ENCODE measurements at regions of chr10 and their contacts with region 1.

Region 1: GRCh38 chr10:110076559-110077318 is 69.0 kb downstream of the ADD3 start:
- DNase-seq: peak; percentile 50 to 75 (median 58)
- ATAC-seq: peak; percentile 92 to 96
- H3K4me3 ChIP-seq: peak overlapping the region; percentile 65
- H3K27ac ChIP-seq: peak overlapping the region; percentile 70
- H3K4me1 ChIP-seq: peaks cover 15% of the 10 kb centered on the region
- H3K27me3 ChIP-seq: no peaks in the 10 kb centered on the region

Region 2: GRCh38 chr10:109894516-109894915 is 182.2 kb before region 1 on chr10:
- intact Hi-C with region 1: loop called in 1 of 4 experiments (anchors 10 kb)
- DNase-seq: peak; percentile 85 to 92 (median 89)
- ATAC-seq: peak; percentile 75 to 86
- H3K4me3 ChIP-seq: no peak overlapping the region
- H3K27ac ChIP-seq: peak overlapping the region; percentile 95
- H3K4me1 ChIP-seq: peaks cover 49% of the 10 kb centered on the region
- H3K27me3 ChIP-seq: no peaks in the 10 kb centered on the region

Region 3: DNA sequence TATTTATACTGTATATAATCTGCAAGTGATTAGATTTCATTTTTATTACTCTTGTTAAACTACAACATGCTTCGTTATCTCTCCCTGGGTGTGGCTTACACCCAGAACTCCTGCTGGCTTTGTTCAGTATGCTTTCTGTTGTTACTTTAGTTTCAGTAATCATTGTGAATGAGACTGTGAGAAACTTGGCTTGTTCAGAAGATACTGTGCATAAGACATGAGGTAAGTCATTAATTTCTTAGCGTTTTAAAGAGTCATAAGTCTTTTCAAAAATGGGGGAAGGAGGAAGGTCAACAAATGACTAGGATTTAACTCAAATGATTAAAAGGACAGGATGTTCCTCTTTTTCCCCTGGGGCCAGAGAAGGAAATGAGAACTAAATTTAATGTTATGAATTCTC is 80.5 kb before region 1 on chr10:
- intact Hi-C with region 1: no loop called
- DNase-seq: no peak
- ATAC-seq: peak in 1 of 2 donors; percentile 64
- H3K4me3 ChIP-seq: no peak overlapping the region
- H3K27ac ChIP-seq: no peak overlapping the region
- H3K4me1 ChIP-seq: no peaks in the 10 kb centered on the region
- H3K27me3 ChIP-seq: no peaks in the 10 kb centered on the region

Region 4: GRCh38 chr10:110016039-110016438 is 60.7 kb before region 1 on chr10:
- intact Hi-C with region 1: loop called in 1 of 4 experiments (anchors 10 kb)
- DNase-seq: no peak
- ATAC-seq: peak; percentile 50 to 55
- H3K4me3 ChIP-seq: no peak overlapping the region
- H3K27ac ChIP-seq: no peak overlapping the region
- H3K4me1 ChIP-seq: peaks cover 14% of the 10 kb centered on the region
- H3K27me3 ChIP-seq: no peaks in the 10 kb centered on the region

Region 5: DNA sequence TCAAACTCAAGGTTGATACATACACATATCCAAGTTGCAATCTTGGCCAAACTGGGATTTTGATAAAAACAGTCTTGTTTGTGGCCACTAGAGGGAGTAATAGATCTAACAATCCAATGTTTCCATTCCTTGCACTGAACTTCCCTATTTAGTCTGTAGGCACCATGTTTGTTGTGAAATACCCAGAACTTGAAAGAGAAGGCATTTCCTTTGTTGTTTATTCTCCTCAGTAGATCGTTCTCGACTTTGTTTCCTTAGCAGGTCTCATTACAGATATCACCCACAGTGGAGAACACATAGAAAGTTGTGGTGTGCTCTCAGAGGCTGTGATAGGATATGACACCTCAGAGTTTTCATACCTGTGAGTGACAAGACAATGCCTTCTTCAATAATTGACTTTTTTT is 60.4 kb after region 1 on chr10:
- intact Hi-C with region 1: no loop called
- DNase-seq: no peak
- ATAC-seq: peak; percentile 79 to 80
- H3K4me3 ChIP-seq: no peak overlapping the region
- H3K27ac ChIP-seq: no peak overlapping the region
- H3K4me1 ChIP-seq: peaks cover 7% of the 10 kb centered on the region
- H3K27me3 ChIP-seq: no peaks in the 10 kb centered on the region

Measured in right cardiac atrium (tissue), 5 donors.